Esophagus muscularis mucosa (tissue), 4 donors: ENCODE measurements at regions of chr7 and their contacts with region 1.

Region 1: GRCh38 chr7:66740302-66740979 is at the start of gene RABGEF1:
- DNase-seq: peak; percentile 100
- H3K4me3 ChIP-seq: peak within 1 kb of the TSS; percentile 84 to 100 (median 98)
- H3K27ac ChIP-seq: peak within 1 kb of the TSS; percentile 96 to 100 (median 100)
- H3K4me1 ChIP-seq: peaks cover 13 to 58% (median 48%) of the 10 kb centered on the region in 4 donors
- H3K27me3 ChIP-seq: no peaks in the 10 kb centered on the region
- CTCF ChIP-seq: peak in 1 of 3 experiments; percentile 2
- EP300 ChIP-seq: no peak
- POLR2A ChIP-seq: peak; percentile 89
- total RNA-seq, gene RABGEF1: 34.3 to 45.4 (median 37.1) TPM

Region 2: GRCh38 chr7:66557608-66558143 is 182.8 kb before region 1 on chr7:
- intact Hi-C with region 1: loop called (anchors 10 kb)
- DNase-seq: no peak
- H3K4me3 ChIP-seq: peak overlapping the region in 3 of 4 donors; percentile 12 to 27 (median 23)
- H3K27ac ChIP-seq: peak overlapping the region in 3 of 4 donors; percentile 30 to 43 (median 33)
- H3K4me1 ChIP-seq: peaks cover 3 to 27% (median 19%) of the 10 kb centered on the region in 4 donors
- H3K27me3 ChIP-seq: no peaks in the 10 kb centered on the region
- CTCF ChIP-seq: peak in 2 of 3 experiments; percentile 91 to 94
- EP300 ChIP-seq: no peak
- POLR2A ChIP-seq: no peak

Region 3: GRCh38 chr7:66681491-66682349 is 58.7 kb before region 1 on chr7:
- intact Hi-C with region 1: loop called (anchors 5 kb)
- DNase-seq: peak; percentile 100
- H3K4me3 ChIP-seq: peak overlapping the region; percentile 72 to 98 (median 88)
- H3K27ac ChIP-seq: peak overlapping the region; percentile 95 to 100 (median 98)
- H3K4me1 ChIP-seq: peaks cover 11 to 37% (median 23%) of the 10 kb centered on the region in 4 donors
- H3K27me3 ChIP-seq: no peaks in the 10 kb centered on the region
- CTCF ChIP-seq: no peak
- EP300 ChIP-seq: no peak
- POLR2A ChIP-seq: peak; percentile 90

Region 4: DNA sequence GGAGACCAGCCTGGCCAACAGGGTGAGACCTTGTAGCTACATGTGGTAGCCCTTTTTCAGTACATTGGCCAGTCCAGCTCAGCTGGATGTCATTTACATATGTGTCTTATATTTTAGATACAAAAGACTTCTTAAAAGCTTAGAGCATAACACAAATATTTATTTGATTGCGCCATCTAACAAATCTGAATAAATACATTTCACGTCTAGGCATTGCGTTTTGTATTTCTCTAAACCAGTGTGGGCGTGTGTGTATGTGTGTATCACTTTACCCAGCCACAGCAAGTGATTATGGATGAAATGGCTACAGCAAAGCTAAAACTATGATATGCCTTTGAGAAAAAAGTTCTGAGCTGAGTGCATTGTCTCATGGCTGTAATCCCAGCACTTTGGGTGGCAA is 14.1 kb after region 1 on chr7:
- intact Hi-C with region 1: no loop called
- DNase-seq: no peak
- H3K4me3 ChIP-seq: no peak overlapping the region
- H3K27ac ChIP-seq: no peak overlapping the region
- H3K4me1 ChIP-seq: peaks cover 2 to 47% (median 29%) of the 10 kb centered on the region in 4 donors
- H3K27me3 ChIP-seq: no peaks in the 10 kb centered on the region
- CTCF ChIP-seq: no peak
- EP300 ChIP-seq: no peak
- POLR2A ChIP-seq: no peak

Region 5: DNA sequence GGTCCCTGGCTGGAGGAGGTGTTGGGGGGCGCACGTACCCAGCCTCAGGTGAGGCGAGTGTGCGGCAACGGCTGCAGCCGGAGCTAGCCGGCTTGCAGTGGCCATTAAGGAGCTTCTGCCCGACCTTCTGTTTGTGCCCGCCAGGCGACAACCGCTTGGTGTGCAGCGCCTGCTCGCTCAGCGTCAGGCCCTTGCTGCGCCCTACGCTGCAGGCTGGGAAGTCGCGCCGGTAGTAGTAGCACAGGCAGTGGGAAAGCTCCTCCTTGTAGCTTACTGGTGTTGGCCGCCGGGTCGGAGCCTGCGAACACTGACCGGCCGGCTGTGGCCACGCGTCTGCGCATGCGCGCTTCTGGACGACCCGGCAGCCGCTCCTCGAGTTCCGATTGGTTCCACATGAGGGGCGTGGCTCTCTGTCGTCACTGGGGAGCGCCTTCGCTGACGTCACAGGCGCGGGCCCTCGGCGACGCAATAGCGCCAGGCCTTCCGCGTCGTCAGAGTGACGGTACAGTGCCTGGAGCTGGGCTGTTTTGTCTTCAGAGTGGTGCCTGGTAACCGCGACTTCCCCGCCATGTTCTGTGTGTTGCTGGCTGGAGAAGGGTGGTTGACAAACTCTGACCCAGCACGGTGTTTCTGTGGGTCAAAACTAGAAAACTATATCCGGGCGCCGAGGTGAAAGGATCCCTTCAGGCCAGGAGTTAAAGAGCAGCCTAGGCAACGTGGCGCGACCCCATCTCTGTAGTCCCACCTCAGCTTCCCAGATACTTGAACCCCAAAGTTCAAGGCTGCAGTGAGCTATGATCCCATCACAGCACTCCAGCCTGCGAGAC is 104.3 kb after region 1 on chr7:
- intact Hi-C with region 1: loop called (anchors 10 kb)
- DNase-seq: peak; percentile 99
- H3K4me3 ChIP-seq: peak overlapping the region; percentile 64 to 77 (median 68)
- H3K27ac ChIP-seq: peak overlapping the region; percentile 85 to 91 (median 90)
- H3K4me1 ChIP-seq: peaks cover 12 to 23% (median 18%) of the 10 kb centered on the region in 4 donors
- H3K27me3 ChIP-seq: no peaks in the 10 kb centered on the region
- CTCF ChIP-seq: peak in 1 of 3 experiments; percentile 41
- EP300 ChIP-seq: peak; percentile 3
- POLR2A ChIP-seq: peak; percentile 71